ENCODE measurements at regions of chr20 and their contacts with region 1.

Region 1: DNA sequence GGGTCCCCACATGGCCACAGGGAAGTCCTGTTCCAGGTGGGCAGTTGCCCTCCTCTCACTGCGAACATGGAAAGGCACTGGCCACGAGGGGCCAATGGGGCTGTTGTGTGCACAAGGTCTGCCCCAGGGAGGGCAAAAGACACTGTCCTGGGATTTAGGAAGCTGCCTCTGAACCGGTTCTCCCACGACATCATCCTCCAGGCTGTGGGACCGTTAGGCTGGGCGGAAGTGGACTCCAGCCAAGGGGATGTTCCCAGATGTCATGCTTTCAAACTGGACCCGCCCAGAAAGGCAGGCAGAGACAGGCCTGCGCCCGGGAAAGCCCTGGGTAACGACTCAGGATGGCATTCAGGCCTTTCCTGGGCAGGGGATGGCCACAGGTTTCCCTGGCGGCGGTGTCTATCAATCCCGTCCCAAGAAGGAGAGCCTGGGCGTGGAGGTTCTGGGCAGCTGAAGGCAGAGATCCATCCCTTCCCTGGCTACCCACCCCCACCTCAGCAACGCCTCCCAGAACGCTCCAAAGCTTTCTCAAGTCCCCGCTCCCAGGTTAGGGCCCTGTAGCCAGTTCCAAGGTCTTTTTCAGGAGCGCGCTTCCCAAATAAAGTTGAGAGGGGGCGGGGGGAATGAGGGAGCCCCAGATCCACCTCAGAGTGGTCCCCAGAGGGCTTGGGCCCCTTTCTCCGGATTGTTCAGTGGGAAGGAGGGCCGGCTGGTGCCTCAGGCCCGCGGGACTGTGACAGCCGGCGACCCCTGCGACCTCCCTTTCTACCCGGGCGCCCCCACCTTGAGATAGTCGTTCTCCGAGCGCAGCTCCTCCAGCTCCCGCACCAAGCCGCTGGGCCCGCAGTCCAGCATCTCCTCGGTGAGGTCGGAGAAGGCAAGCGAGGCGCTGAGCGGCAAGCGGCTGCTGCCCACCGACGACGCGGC is 13.8 kb upstream of the TLDC2 start:
- DNase-seq: peak; percentile 75 to 77
- ATAC-seq: peak; percentile 63 to 79
- H3K4me3 ChIP-seq: peak overlapping the region; percentile 48 to 56 (median 52)
- H3K27ac ChIP-seq: peak overlapping the region; percentile 78 to 83 (median 80)
- H3K4me1 ChIP-seq: peaks cover 10 to 12% of the 10 kb centered on the region in 2 donors
- H3K27me3 ChIP-seq: no peaks in the 10 kb centered on the region
- CTCF ChIP-seq: no peak
- POLR2A ChIP-seq: peak; percentile 53 to 73

Region 2: GRCh38 chr20:36493013-36493800 is 368.9 kb before region 1 on chr20:
- in situ Hi-C with region 1: no loop called
- intact Hi-C with region 1: no loop called
- DNase-seq: peak in 1 of 2 donors; percentile 41
- ATAC-seq: peak; percentile 31 to 33
- H3K4me3 ChIP-seq: peak overlapping the region in 1 of 4 donors; percentile 22
- H3K27ac ChIP-seq: peak overlapping the region; percentile 89 to 96 (median 92)
- H3K4me1 ChIP-seq: peaks cover 52 to 68% of the 10 kb centered on the region in 2 donors
- H3K27me3 ChIP-seq: no peaks in the 10 kb centered on the region
- CTCF ChIP-seq: peak; percentile 13 to 64 (median 58)
- POLR2A ChIP-seq: peak; percentile 64 to 69

Region 3: DNA sequence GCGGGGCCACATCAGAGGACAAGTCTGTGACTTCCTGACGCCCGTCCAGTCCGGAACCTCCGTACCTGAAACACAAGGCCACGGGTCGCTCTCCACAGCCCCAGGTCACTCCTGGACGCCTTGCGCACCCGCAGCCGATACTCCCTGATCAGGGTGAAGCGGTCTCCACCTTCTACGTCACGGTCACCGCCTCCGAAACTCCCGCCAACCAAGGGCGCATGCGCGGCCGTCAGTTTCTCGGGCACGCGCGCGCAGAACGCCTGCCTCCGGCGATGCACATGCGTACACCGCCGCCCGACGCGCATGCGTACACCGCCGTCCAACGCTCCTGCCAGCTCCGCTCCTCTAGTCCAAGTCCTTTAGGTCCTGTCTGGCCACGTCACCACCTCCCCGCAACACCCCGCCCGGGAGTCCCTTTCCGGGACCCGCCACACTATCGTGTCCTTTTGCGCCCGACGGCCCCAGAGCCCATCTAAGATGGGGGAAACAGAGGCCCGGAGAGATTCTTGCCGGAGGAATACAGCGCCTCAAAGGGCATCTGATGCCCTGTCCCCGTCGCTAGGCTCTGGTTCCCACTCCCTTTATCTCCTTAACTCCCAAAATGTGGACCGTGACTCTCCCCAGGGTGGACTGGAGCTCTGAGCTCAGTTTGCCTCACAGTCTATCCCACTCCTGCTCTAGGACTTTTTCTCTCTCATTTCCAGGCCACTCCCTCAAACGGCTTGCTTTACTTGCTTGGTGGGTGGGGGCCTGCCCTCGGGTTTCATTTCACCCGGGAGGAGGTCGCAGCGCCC is 88.3 kb before region 1 on chr20 and contains the start of gene DSN1:
- in situ Hi-C with region 1: no loop called
- intact Hi-C with region 1: loop called (anchors 2 kb)
- DNase-seq: peak; percentile 93 to 97
- ATAC-seq: peak; percentile 94 to 96
- H3K4me3 ChIP-seq: peak within 1 kb of the TSS; percentile 82 to 91 (median 84)
- H3K27ac ChIP-seq: peak within 1 kb of the TSS; percentile 88 to 95 (median 91)
- H3K4me1 ChIP-seq: peaks cover 8 to 12% of the 10 kb centered on the region in 2 donors
- H3K27me3 ChIP-seq: no peaks in the 10 kb centered on the region
- CTCF ChIP-seq: no peak
- POLR2A ChIP-seq: peak; percentile 50 to 52
- total RNA-seq, gene DSN1: 3.2 to 6.3 (median 5.2) TPM

Region 4: DNA sequence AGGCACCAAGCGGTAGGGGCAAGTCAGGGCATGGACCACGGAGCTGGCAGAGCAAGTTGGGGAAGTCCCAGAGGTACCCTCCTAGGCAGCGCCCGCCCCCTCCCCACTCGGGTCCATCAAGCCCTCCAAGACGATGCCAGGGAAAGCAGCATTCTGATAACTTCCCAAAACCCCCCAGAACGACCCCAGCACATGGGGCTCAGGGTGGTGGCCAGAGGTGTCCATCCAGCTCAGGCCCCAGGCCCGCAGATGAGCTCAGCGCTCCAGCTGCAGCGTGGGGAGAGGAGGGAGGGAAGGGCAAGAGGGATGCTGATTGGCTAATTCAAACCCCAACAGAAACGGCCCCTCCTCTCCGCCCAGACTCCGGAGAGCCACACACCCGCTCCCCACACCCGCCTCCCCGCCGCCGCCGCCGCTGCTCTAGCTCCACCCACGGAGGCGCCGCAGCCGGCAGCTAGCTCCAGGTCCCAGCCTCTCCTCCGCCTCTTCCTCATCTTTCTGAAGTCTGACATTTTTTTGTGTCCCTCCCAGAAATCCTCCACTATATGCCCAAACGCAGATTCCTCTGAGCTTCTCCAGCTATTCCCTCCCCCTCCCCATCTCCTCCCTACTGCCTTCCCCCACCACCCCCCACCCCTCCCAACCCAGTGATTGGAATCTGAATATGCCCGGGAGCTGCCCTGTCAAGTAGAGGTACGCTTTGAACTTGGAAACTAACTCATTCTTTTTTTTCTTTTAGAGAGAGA is 26.5 kb before region 1 on chr20:
- in situ Hi-C with region 1: no loop called
- intact Hi-C with region 1: loop called (anchors 2 kb)
- DNase-seq: peak; percentile 81 to 84
- ATAC-seq: peak; percentile 84 to 87
- H3K4me3 ChIP-seq: peak overlapping the region in 3 of 4 donors; percentile 34 to 46 (median 34)
- H3K27ac ChIP-seq: peak overlapping the region; percentile 62 to 72 (median 70)
- H3K4me1 ChIP-seq: peaks cover 37 to 45% of the 10 kb centered on the region in 2 donors
- H3K27me3 ChIP-seq: no peaks in the 10 kb centered on the region
- CTCF ChIP-seq: no peak
- POLR2A ChIP-seq: peak; percentile 32 to 58

Region 5: GRCh38 chr20:36951198-36951976 is 89.2 kb after region 1 on chr20 and contains the start of gene SAMHD1:
- in situ Hi-C with region 1: no loop called
- intact Hi-C with region 1: loop called (anchors 1 kb)
- DNase-seq: peak; percentile 97 to 98
- ATAC-seq: peak; percentile 96 to 97
- H3K4me3 ChIP-seq: peak within 1 kb of the TSS; percentile 89 to 100 (median 98)
- H3K27ac ChIP-seq: peak within 1 kb of the TSS; percentile 81 to 98 (median 91)
- H3K4me1 ChIP-seq: peaks cover 13 to 32% of the 10 kb centered on the region in 2 donors
- H3K27me3 ChIP-seq: no peaks in the 10 kb centered on the region
- CTCF ChIP-seq: peak in 3 of 5 experiments; percentile 12 to 37 (median 16)
- POLR2A ChIP-seq: peak; percentile 82 to 86
- total RNA-seq, gene SAMHD1: 37.5 to 84.1 (median 69.4) TPM

Region 6: DNA sequence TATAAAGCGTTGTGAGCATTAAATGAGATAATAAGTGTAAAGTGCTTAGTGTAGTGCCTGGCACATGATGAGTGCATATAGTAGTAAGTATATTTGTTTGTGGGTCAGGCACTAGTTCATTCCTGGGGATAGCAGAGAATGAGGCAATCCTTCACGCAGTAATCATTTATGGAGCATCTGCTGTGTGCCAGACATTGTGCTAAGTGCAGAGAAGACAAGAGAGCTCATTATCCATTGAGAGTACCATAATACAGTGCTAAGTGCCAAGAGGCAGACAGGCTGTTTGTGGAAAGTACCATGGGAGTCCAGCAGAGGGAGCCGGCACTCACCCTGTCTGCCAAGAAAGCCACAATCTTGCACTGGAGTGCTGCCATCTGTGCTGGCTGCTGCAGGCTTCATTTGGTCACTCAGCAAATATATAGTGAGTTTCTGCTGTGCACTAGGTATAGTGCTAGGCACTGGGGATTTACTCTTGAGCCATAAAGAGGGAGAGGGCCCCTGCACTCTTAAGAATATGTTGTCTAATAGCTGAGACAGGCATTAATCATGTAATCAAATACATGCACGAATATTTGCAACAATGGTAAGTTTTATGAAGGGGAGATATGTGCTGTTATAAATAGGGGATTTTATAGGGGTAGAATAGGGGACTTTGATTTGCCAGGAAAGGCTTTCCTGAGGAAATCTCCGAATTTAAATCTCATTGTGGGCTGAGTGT is 330.2 kb after region 1 on chr20:
- in situ Hi-C with region 1: no loop called
- intact Hi-C with region 1: no loop called
- DNase-seq: peak; percentile 74 to 87
- ATAC-seq: peak; percentile 72 to 87
- H3K4me3 ChIP-seq: no peak overlapping the region
- H3K27ac ChIP-seq: peak overlapping the region in 3 of 4 donors; percentile 40 to 72 (median 47)
- H3K4me1 ChIP-seq: peaks cover 47 to 50% of the 10 kb centered on the region in 2 donors
- H3K27me3 ChIP-seq: no peaks in the 10 kb centered on the region
- CTCF ChIP-seq: peak; percentile 73 to 95 (median 85)
- POLR2A ChIP-seq: no peak

Measured in gastrocnemius medialis (tissue), 4 donors.